ENCODE measurements at regions of chr12 and their contacts with region 1.

Region 1: GRCh38 chr12:119780786-119781434 is 96.2 kb downstream of the CIT start:
- H3K4me3 ChIP-seq: no peak overlapping the region
- H3K27ac ChIP-seq: no peak overlapping the region
- H3K4me1 ChIP-seq: no peaks in the 10 kb centered on the region
- CTCF ChIP-seq: peak; percentile 50

Region 2: DNA sequence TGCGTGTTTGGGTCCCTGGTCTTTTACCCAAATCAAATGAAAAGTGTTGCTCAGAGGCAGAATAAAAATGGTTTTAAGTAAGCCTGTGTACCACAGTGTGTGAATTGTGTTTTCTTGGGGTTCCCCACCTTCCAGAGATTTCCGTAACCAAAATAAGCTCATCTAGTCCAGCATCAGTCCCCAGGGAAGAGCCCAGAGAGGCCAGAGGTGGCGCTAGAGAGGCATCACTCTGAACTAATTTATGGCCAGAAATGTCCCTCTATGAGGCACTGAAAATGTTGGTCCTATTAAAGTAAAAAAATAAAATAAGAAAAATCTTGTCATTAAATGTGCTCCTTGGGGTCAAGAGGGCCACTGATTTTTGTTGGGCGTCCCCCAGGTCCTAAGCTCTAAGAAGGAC is 137.9 kb before region 1 on chr12:
- CTCF ChIA-PET with region 1: no interaction called
- POLR2A ChIA-PET with region 1: no interaction called
- H3K4me3 ChIP-seq: no peak overlapping the region
- H3K27ac ChIP-seq: no peak overlapping the region
- H3K4me1 ChIP-seq: no peaks in the 10 kb centered on the region
- CTCF ChIP-seq: no peak

Region 3: GRCh38 chr12:119791453-119791852 is 10.5 kb after region 1 on chr12:
- CTCF ChIA-PET with region 1: interaction called, 12 read pairs
- POLR2A ChIA-PET with region 1: no interaction called
- H3K4me3 ChIP-seq: no peak overlapping the region
- H3K27ac ChIP-seq: no peak overlapping the region
- H3K4me1 ChIP-seq: no peaks in the 10 kb centered on the region
- CTCF ChIP-seq: no peak

Region 4: DNA sequence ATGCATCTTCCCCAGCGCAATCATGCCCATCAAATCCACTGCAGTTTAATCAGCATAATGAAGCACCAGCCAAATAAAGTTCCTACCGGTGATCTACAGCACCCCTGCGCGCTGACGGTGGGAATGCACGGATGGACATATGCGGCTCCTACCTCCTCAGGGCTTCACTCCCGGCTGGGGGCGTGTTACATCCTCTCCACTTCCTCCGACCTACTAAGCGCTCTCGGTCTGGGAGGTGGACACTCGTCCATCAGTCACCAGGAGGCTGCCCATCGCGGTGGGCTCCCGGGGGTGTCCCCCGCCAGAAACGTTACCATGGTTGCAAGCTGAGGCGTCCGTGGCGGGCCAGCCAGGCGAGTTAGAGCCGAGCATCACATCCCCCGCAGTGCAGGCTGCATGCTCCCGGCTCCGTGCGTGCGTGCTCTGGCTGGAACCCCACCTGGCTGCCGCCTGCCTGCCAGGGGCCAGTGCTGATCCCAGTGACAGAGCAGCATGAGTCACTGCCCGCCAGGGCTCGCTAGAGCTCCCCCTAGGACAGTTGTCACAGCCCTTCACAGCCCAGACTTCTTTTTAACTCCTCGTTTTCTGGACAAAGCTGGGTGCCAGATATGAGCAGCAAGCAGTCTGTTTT is 23.2 kb after region 1 on chr12:
- CTCF ChIA-PET with region 1: interaction called, 28 read pairs
- POLR2A ChIA-PET with region 1: no interaction called
- H3K4me3 ChIP-seq: no peak overlapping the region
- H3K27ac ChIP-seq: no peak overlapping the region
- H3K4me1 ChIP-seq: no peaks in the 10 kb centered on the region
- CTCF ChIP-seq: peak; percentile 60; the same call in 1 of the 2 replicates

Region 5: DNA sequence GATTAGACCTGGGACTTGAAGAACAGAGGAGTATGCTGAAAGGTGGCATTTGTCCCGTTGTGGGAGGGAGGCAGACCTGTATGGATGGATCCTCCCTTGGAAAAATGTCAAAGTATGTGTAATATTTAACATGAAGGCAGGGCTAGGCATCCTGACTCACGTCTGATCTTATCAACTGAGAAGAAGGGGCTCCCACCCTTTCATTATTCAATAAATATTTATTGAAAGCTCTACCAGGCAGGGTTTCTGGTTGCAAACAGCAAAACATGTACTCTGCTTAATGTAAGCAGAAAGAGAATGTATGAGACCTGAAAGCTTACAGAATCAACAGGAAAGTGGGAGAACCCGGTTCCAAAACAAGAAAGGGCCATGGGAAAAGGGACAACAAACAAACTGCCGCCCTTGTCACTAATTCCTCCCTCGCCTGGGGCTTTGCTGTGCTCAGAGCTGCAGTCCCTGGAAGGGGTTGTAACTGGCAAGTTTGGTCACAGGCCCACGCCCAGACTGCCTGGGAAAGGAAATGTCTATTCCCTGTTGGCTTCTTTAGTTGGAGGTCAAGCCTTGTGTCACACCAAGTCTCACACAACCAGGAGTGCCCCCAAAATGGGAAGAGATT is 298.6 kb after region 1 on chr12:
- CTCF ChIA-PET with region 1: no interaction called
- POLR2A ChIA-PET with region 1: no interaction called
- H3K4me3 ChIP-seq: no peak overlapping the region
- H3K27ac ChIP-seq: no peak overlapping the region
- H3K4me1 ChIP-seq: no peaks in the 10 kb centered on the region
- CTCF ChIP-seq: no peak

Measured in HEK293 (cell line).